ENCODE measurements at regions of chr1 and their contacts with region 1.

Region 1: DNA sequence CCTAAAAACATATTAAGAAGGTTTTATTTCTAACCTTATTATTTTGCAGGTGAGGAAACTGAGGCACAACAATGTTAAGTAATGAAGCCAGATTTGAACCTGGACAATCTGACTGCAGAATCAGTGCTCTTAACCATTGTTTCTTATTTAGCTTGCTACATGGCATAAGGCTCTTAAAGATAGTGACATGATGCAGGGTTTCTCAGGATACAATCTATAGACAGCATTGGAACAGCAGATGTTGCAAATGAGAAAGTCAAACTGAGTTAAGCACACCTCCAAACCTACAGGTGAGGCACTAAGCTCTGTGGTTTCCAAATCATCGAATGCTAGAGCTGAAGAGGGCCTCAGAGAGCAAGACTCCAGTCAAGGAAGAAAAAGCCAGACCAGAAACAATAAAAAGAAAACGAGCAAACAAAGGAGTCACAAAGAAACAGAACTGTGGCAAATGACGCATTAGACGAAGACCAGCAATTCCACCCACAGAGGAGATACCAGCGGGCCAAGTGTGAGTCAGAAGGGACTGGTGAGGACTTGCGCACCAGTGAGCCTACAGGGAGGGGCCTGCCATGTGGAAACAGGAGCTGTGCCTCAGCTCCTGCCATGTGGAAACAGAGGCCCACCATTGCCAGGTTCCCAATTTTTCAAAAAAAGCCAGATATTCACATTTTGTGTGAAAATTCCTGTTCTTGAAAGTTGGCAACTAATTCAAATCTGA is 14.4 kb downstream of the CD58 start:
- DNase-seq: no peak
- ATAC-seq: peak; percentile 76
- H3K4me3 Mint-ChIP-seq: peak overlapping the region; percentile 65
- H3K27ac Mint-ChIP-seq: peak overlapping the region; percentile 99
- H3K4me1 Mint-ChIP-seq: peaks cover 90% of the 10 kb centered on the region
- H3K27me3 Mint-ChIP-seq: no peaks in the 10 kb centered on the region
- CTCF ChIP-seq: no peak

Region 2: DNA sequence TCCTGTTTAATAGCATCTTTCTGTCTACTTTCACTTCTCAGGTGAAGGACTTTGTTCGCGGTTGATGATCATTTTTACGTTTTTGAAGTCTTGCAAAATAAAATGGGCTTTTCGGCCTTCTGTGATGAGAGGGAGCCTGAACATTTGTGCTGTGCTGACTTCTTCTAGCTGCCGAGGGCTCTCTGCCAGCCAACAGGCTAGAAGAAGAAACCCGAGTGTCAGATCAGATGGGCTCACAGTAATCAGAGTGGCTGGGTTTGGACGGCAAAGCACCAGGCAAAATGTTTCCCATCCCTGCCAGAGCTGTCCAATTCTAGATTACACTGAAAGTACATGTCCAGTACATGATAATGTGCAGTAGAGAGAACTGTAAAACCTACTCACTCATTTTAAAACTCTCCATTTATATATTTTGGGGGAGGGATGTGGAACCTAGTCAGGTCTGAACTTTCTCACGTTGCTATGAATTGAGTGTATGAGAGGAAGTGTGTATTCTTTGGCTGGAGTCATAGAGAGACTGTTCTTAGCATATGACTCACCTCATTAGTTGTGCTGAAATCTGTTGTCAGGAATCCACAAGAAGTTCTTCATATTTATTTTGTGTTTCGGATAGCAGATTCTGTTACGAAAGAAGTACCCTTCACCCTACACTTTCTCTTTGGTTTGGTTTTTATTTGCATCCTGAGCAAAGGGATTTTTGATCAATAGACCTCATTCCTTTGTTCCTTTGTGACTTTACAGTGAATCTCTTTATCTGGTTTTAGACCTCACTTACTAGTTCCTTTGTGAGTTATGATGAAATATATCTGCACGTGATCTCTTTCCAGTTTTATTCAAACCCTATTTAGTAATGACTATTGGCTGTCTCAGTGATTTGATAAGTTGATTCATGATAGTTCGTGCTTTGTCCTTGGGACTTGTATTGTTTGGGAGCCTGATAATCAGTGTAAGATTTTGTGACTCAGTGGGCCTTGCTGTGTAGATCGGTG is 178.6 kb before region 1 on chr1:
- CTCF ChIA-PET with region 1: no interaction called
- POLR2A ChIA-PET with region 1: interaction called, 6 read pairs
- intact Hi-C with region 1: loop called (anchors 5 kb)
- DNase-seq: peak; percentile 18
- ATAC-seq: peak; percentile 56
- H3K4me3 Mint-ChIP-seq: peak overlapping the region; percentile 78
- H3K27ac Mint-ChIP-seq: peak overlapping the region; percentile 94
- H3K4me1 Mint-ChIP-seq: peaks cover 80% of the 10 kb centered on the region
- H3K27me3 Mint-ChIP-seq: no peaks in the 10 kb centered on the region
- CTCF ChIP-seq: no peak

Region 3: GRCh38 chr1:116514708-116515525 is 41.5 kb before region 1 on chr1:
- CTCF ChIA-PET with region 1: interaction called, 6 read pairs
- POLR2A ChIA-PET with region 1: interaction called, 21 read pairs
- intact Hi-C with region 1: loop called (anchors 5 kb)
- DNase-seq: no peak
- ATAC-seq: peak; percentile 76
- H3K4me3 Mint-ChIP-seq: peak overlapping the region; percentile 56
- H3K27ac Mint-ChIP-seq: peak overlapping the region; percentile 92
- H3K4me1 Mint-ChIP-seq: peaks cover 59% of the 10 kb centered on the region
- H3K27me3 Mint-ChIP-seq: no peaks in the 10 kb centered on the region
- CTCF ChIP-seq: no peak

Region 4: DNA sequence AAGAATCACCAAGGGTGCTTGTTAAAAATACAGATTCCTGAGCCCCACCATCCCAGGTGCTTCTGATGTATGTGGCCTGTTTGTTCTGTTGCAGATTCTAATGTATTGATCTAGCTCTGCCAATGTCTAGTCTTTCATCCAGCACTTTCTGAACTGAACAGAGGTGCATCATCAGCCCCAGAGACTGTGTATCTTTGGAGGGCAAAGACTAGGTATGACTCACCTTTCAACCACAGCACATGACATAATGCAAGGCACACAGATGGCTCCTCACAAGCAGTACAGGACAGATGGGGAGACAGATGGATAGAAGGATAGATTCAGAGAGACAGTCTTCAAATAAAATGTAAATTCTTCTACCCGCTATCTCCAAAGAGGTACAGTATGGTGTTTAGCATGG is 17.9 kb before region 1 on chr1:
- CTCF ChIA-PET with region 1: interaction called, 3 read pairs
- POLR2A ChIA-PET with region 1: interaction called, 66 read pairs
- intact Hi-C with region 1: loop called (anchors 1 kb)
- DNase-seq: no peak
- ATAC-seq: peak; percentile 80
- H3K4me3 Mint-ChIP-seq: peak overlapping the region; percentile 20
- H3K27ac Mint-ChIP-seq: peak overlapping the region; percentile 86
- H3K4me1 Mint-ChIP-seq: peaks cover 66% of the 10 kb centered on the region
- H3K27me3 Mint-ChIP-seq: no peaks in the 10 kb centered on the region
- CTCF ChIP-seq: no peak

Region 5: DNA sequence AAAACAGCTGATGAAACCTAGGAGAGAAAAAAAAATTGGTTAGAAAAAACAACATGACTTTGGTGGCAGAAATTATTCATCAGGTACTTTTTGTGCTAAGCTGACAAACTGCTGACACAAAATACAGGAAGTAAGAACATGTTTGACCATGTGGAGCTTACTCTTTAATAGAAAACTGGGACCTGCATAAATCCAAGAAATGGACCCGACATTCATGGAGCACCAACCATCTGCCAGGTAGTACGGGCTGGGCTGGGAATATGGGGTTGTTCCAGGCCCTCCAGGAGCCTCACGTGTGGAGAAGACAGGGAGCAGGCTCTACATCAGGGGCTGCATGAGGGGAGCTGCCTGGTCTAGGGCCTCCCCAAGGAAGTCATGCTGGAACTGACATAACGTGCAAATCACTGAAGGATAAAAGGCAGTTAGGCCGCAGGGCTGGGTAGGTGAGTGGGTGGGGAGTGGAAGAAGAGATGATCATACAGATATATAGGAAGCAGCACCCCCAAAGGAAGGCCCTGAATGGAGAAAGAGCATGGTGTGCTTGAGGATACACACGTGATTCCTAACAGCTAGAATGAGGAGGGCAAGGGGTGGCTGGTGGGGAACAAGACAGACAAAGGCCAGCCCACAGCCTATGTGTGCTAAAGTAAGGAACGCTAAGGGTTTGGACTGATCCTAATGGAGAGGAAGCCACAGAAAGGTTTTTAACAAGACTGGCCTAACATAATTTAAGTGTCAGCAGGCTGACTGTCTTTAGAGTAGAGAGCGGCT is 11.7 kb before region 1 on chr1:
- CTCF ChIA-PET with region 1: interaction called, 6 read pairs
- POLR2A ChIA-PET with region 1: interaction called, 66 read pairs
- intact Hi-C with region 1: loop called (anchors 1 kb)
- DNase-seq: peak; percentile 46
- ATAC-seq: peak; percentile 74
- H3K4me3 Mint-ChIP-seq: peak overlapping the region; percentile 76
- H3K27ac Mint-ChIP-seq: peak overlapping the region; percentile 96
- H3K4me1 Mint-ChIP-seq: peaks cover 81% of the 10 kb centered on the region
- H3K27me3 Mint-ChIP-seq: no peaks in the 10 kb centered on the region
- CTCF ChIP-seq: no peak

Region 6: DNA sequence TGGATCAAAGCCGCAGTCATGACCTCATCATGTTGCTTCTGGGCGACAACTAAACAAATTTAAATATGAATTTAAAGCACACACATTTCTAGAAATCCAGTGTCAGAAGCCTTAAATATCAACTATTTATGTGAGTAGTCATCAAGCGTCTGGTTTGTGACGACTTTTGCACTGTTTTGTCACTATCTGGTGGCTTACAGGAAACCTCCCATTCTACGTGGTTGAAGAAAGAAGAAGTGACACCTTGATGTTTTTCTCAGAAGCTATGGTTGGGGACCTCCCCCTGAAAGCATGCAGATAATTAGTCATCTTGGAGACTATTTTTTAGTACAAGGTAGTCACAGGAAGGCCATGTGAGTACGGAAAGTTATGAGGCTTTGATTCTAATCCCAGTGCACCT is 1107.9 kb after region 1 on chr1:
- CTCF ChIA-PET with region 1: no interaction called
- POLR2A ChIA-PET with region 1: no interaction called
- intact Hi-C with region 1: loop called (anchors 5 kb)
- DNase-seq: no peak
- ATAC-seq: peak; percentile 87
- H3K4me3 Mint-ChIP-seq: peak overlapping the region; percentile 44
- H3K27ac Mint-ChIP-seq: peak overlapping the region; percentile 93
- H3K4me1 Mint-ChIP-seq: peaks cover 83% of the 10 kb centered on the region
- H3K27me3 Mint-ChIP-seq: no peaks in the 10 kb centered on the region
- CTCF ChIP-seq: no peak